Aorta (tissue), 5 donors: ENCODE measurements at regions of chr1 and their contacts with region 1.

Region 1: DNA sequence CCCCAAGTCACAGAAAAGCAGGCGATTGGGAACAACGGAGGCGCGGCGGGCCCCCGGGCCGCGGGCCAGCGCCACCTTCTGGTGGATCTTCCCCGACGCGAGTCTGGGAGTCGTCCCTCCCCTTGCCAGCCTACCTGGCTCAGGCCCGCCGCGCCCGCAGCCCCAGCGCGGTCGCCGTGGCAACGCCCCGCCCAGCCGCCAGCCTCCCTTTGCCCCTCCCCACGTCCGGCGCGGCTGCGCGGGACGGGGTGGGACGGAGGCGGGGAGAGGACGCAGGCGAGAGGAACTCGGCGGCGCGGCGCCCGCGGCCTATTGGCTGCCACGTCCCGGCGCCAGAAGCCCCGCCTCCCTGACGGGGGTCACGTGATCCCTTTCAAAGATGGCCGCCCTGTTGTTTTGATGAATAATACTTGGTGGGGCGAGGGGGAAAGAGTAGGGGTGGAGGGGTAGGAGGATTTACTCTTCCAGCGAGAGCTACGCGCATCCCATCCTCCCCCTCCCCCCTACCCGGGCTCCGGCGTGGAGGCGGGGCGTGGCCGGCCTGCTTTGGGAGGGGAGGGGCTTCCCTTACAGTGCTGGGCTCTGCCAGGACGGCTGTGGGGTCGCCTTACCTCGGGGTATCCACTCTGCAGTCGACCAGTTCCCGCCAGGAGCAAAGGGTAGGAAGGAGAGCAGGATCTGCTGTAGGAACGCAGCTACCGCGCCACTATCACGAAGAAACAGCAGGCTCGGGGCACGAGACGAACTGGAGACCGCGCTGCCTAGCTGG is at the start of gene UBE4B:
- DNase-seq: peak; percentile 99
- ATAC-seq: peak; percentile 100
- H3K4me3 ChIP-seq: peak within 1 kb of the TSS; percentile 55 to 89
- H3K27ac ChIP-seq: peak within 1 kb of the TSS; percentile 37 to 77
- H3K4me1 ChIP-seq: no peaks in the 10 kb centered on the region
- H3K27me3 ChIP-seq: no peaks in the 10 kb centered on the region
- total RNA-seq, gene UBE4B: 46.9 to 54.8 TPM

Region 2: GRCh38 chr1:9874959-9875635 is 157.7 kb before region 1 on chr1:
- intact Hi-C with region 1: loop called in 1 of 2 experiments (anchors 5 kb)
- DNase-seq: peak; percentile 75 to 89
- ATAC-seq: peak; percentile 89
- H3K4me3 ChIP-seq: no peak overlapping the region
- H3K27ac ChIP-seq: peak overlapping the region in 1 of 2 donors; percentile 14
- H3K4me1 ChIP-seq: peaks cover 0 to 2% of the 10 kb centered on the region in 2 donors
- H3K27me3 ChIP-seq: no peaks in the 10 kb centered on the region

Region 3: GRCh38 chr1:10065344-10065685 is 32.5 kb after region 1 on chr1:
- intact Hi-C with region 1: loop called in 1 of 2 experiments (anchors 2 kb)
- DNase-seq: peak in 1 of 2 donors; percentile 30
- ATAC-seq: no peak
- H3K4me3 ChIP-seq: no peak overlapping the region
- H3K27ac ChIP-seq: peak overlapping the region in 1 of 2 donors; percentile 23
- H3K4me1 ChIP-seq: peaks cover 0 to 5% of the 10 kb centered on the region in 2 donors
- H3K27me3 ChIP-seq: no peaks in the 10 kb centered on the region

Region 4: GRCh38 chr1:10108134-10108663 is 75.4 kb after region 1 on chr1:
- intact Hi-C with region 1: loop called in 1 of 2 experiments (anchors 2 kb)
- DNase-seq: no peak
- ATAC-seq: peak; percentile 83
- H3K4me3 ChIP-seq: peak overlapping the region in 1 of 2 donors; percentile 19
- H3K27ac ChIP-seq: peak overlapping the region; percentile 91 to 97
- H3K4me1 ChIP-seq: peaks cover 0 to 7% of the 10 kb centered on the region in 2 donors
- H3K27me3 ChIP-seq: no peaks in the 10 kb centered on the region

Region 5: DNA sequence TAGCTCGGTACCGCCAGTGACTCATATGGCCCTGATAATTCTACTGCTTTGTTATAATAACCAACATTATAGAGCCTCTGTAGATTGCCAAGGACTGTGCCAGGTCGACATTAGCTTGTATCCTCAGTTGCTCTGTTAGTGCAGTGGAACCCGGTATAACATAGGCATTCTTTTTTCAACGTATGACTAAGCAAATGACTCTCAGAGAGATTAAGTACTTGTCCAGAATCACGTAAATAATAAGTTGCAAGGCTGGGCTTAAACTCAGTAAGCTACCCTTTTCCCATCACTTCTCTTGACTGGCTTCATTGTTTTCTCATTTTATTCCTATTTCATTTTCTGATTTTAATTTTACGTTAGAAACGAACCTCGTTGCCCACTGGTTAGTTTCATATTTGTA is 85.1 kb after region 1 on chr1:
- intact Hi-C with region 1: loop called (anchors 5 kb)
- DNase-seq: no peak
- ATAC-seq: peak; percentile 57
- H3K4me3 ChIP-seq: no peak overlapping the region
- H3K27ac ChIP-seq: peak overlapping the region; percentile 30 to 80
- H3K4me1 ChIP-seq: peaks cover 0 to 4% of the 10 kb centered on the region in 2 donors
- H3K27me3 ChIP-seq: no peaks in the 10 kb centered on the region

Region 6: DNA sequence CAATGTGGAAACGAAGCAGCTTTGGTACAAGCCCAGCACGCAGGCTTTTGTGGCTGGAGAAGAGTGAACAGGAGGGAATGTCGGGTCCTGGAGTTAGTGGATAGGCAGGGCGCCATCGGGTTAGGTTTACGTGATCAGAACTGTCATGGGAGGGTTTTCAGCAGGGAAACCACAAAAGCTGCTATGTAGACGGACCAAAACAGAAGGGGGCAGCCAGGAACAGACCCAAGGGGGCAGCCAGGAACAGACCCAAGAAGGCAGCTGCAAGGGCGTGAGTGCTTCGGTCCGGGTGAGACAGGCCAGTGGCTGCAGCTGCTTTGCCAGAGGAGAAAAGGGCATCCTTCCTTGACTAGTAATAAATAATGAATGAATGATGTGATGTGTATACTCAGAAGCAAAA is 100.1 kb after region 1 on chr1:
- intact Hi-C with region 1: no loop called
- DNase-seq: no peak
- ATAC-seq: no peak
- H3K4me3 ChIP-seq: no peak overlapping the region
- H3K27ac ChIP-seq: no peak overlapping the region
- H3K4me1 ChIP-seq: peaks cover 0 to 4% of the 10 kb centered on the region in 2 donors
- H3K27me3 ChIP-seq: no peaks in the 10 kb centered on the region

Region 7: GRCh38 chr1:10152709-10153284 is 120.0 kb after region 1 on chr1:
- intact Hi-C with region 1: loop called in 1 of 2 experiments (anchors 5 kb)
- DNase-seq: peak; percentile 70 to 83
- ATAC-seq: peak; percentile 80
- H3K4me3 ChIP-seq: no peak overlapping the region
- H3K27ac ChIP-seq: peak overlapping the region in 1 of 2 donors; percentile 11
- H3K4me1 ChIP-seq: no peaks in the 10 kb centered on the region
- H3K27me3 ChIP-seq: no peaks in the 10 kb centered on the region